CD8-positive, alpha-beta T cell (primary cell): ENCODE measurements at regions of chr3 and their contacts with region 1.

Region 1: GRCh38 chr3:71725279-71725991 is at the start of gene EIF4E3:
- DNase-seq: peak in 8 of 9 experiments; percentile 26 to 79 (median 42)
- ATAC-seq: peak; percentile 28
- H3K4me3 ChIP-seq: peak within 1 kb of the TSS; percentile 74 to 89
- H3K4me3 Mint-ChIP-seq: peak within 1 kb of the TSS; percentile 92
- H3K27ac ChIP-seq: peak within 1 kb of the TSS; percentile 54 to 80
- H3K27ac Mint-ChIP-seq: peak within 1 kb of the TSS; percentile 97
- H3K4me1 ChIP-seq: peaks cover 59% of the 10 kb centered on the region
- H3K4me1 Mint-ChIP-seq: peaks cover 73% of the 10 kb centered on the region
- H3K27me3 ChIP-seq: no peaks in the 10 kb centered on the region
- H3K27me3 Mint-ChIP-seq: no peaks in the 10 kb centered on the region
- CTCF ChIP-seq: no peak
- total RNA-seq, gene EIF4E3: 33.0 to 34.5 TPM

Region 2: DNA sequence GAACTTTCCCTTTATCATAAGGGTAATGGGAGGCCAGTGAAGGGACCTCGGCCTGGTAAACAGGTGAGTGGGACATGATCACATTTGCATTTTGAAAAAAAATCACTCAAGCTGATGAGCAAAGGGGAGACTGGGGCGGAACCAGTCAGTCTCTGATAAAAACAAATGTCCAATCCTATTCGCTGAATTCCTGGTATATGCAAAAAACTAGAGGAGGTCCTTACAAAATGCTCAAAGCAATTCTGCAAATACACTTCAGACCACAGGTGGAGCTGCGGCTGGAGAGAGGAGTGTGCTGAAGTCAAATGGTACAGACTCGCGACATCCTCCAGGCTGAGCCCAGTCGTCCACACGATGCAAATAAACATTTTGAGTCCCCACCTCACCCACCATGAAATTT is 308.6 kb before region 1 on chr3:
- CTCF ChIA-PET with region 1: no interaction called
- POLR2A ChIA-PET with region 1: no interaction called
- intact Hi-C with region 1: loop called in 1 of 2 experiments (anchors 10 kb)
- DNase-seq: peak in 6 of 9 experiments; percentile 41 to 82 (median 60)
- ATAC-seq: peak; percentile 67
- H3K4me3 ChIP-seq: peak overlapping the region in 1 of 2 experiments; percentile 11
- H3K4me3 Mint-ChIP-seq: peak overlapping the region; percentile 54
- H3K27ac ChIP-seq: peak overlapping the region; percentile 60 to 63
- H3K27ac Mint-ChIP-seq: peak overlapping the region; percentile 93
- H3K4me1 ChIP-seq: peaks cover 81% of the 10 kb centered on the region
- H3K4me1 Mint-ChIP-seq: peaks cover 92% of the 10 kb centered on the region
- H3K27me3 ChIP-seq: no peaks in the 10 kb centered on the region
- H3K27me3 Mint-ChIP-seq: no peaks in the 10 kb centered on the region
- CTCF ChIP-seq: peak; percentile 31

Region 3: DNA sequence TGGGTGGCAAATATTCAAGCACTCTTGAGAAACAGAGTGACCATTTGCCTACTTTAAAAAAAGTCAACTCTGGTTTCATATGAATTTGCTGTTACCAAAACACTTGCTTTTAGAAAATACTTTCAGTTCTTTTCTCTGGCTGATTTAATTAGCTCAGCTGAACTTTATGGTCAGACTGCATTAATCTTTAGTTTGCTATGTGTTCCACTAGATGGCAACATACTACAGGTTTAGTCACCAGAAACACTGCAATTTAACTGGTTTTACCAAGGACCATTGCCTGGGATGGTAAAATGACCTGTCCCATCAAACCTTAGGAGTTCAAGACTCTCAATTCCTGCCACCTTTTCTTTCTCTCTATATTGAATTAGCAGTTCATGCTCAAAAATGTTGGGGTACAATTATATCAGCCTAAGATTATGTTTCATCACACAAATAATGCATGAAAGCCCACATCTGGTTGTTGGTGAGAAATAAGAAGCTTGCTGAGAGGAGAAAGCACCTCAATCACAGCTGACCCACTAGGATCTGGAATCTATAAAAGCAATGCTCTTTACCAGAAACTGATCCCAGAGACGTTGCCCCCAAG is 14.4 kb before region 1 on chr3:
- CTCF ChIA-PET with region 1: interaction called, 105 read pairs
- POLR2A ChIA-PET with region 1: interaction called, 5 read pairs
- intact Hi-C with region 1: loop called (anchors 1 to 2 kb)
- DNase-seq: peak in 2 of 9 experiments; percentile 59 to 69
- ATAC-seq: peak; percentile 73
- H3K4me3 ChIP-seq: no peak overlapping the region
- H3K4me3 Mint-ChIP-seq: no peak overlapping the region
- H3K27ac ChIP-seq: no peak overlapping the region
- H3K27ac Mint-ChIP-seq: peak overlapping the region; percentile 7
- H3K4me1 ChIP-seq: peaks cover 23% of the 10 kb centered on the region
- H3K4me1 Mint-ChIP-seq: peaks cover 72% of the 10 kb centered on the region
- H3K27me3 ChIP-seq: no peaks in the 10 kb centered on the region
- H3K27me3 Mint-ChIP-seq: no peaks in the 10 kb centered on the region
- CTCF ChIP-seq: peak; percentile 87

Region 4: DNA sequence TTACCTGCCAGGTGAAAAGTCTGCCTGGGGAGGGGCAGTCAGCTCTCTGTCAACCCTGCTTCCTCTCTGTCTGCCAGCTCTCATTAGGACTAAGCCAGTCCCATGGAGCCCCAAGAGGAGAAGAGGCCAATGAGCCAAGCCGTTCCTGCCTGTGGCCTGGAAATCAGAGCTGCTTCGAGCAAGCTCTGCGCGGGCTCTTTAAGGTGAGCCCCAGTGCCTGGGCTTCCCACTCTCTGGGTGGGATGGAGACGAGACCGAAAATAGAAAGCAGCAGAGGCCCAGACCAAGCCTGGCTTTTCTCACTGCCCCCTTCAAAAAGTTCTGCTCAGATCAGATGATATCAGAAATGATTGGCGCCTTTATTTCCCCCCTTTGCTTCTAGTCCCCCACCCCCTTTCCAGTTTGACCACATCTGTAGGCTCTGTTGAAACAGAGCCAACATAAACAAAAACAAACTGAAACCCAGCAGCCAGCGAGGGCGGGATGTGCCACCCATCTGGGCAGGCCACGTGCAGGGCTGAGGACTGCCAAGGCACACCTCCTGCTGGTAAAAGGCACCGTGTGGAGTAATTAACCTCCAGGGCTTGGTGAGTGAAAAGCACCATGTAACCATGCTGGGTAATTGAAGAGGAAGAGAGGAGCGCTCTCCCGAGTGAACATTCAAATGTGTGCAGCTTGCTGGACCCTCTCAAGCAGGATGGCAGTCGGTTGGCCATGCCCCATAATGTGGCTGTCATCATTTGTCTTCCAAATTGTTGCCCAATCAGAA is 530.5 kb after region 1 on chr3:
- CTCF ChIA-PET with region 1: no interaction called
- POLR2A ChIA-PET with region 1: no interaction called
- intact Hi-C with region 1: loop called in 1 of 2 experiments (anchors 10 kb)
- DNase-seq: peak in 7 of 9 experiments; percentile 10 to 69 (median 29)
- ATAC-seq: peak; percentile 77
- H3K4me3 ChIP-seq: no peak overlapping the region
- H3K4me3 Mint-ChIP-seq: peak overlapping the region; percentile 59
- H3K27ac ChIP-seq: no peak overlapping the region
- H3K27ac Mint-ChIP-seq: peak overlapping the region; percentile 55
- H3K4me1 ChIP-seq: peaks cover 35% of the 10 kb centered on the region
- H3K4me1 Mint-ChIP-seq: peaks cover 41% of the 10 kb centered on the region
- H3K27me3 ChIP-seq: no peaks in the 10 kb centered on the region
- H3K27me3 Mint-ChIP-seq: no peaks in the 10 kb centered on the region
- CTCF ChIP-seq: no peak

Region 5: GRCh38 chr3:72756900-72757299 is 1031.5 kb after region 1 on chr3:
- CTCF ChIA-PET with region 1: no interaction called
- POLR2A ChIA-PET with region 1: no interaction called
- intact Hi-C with region 1: loop called in 1 of 2 experiments (anchors 10 kb)
- DNase-seq: peak in 8 of 9 experiments; percentile 10 to 80 (median 52)
- ATAC-seq: peak; percentile 97
- H3K4me3 ChIP-seq: peak overlapping the region in 1 of 2 experiments; percentile 38
- H3K4me3 Mint-ChIP-seq: peak overlapping the region; percentile 60
- H3K27ac ChIP-seq: peak overlapping the region; percentile 51 to 52
- H3K27ac Mint-ChIP-seq: peak overlapping the region; percentile 93
- H3K4me1 ChIP-seq: peaks cover 44% of the 10 kb centered on the region
- H3K4me1 Mint-ChIP-seq: peaks cover 59% of the 10 kb centered on the region
- H3K27me3 ChIP-seq: no peaks in the 10 kb centered on the region
- H3K27me3 Mint-ChIP-seq: no peaks in the 10 kb centered on the region
- CTCF ChIP-seq: no peak

Region 6: DNA sequence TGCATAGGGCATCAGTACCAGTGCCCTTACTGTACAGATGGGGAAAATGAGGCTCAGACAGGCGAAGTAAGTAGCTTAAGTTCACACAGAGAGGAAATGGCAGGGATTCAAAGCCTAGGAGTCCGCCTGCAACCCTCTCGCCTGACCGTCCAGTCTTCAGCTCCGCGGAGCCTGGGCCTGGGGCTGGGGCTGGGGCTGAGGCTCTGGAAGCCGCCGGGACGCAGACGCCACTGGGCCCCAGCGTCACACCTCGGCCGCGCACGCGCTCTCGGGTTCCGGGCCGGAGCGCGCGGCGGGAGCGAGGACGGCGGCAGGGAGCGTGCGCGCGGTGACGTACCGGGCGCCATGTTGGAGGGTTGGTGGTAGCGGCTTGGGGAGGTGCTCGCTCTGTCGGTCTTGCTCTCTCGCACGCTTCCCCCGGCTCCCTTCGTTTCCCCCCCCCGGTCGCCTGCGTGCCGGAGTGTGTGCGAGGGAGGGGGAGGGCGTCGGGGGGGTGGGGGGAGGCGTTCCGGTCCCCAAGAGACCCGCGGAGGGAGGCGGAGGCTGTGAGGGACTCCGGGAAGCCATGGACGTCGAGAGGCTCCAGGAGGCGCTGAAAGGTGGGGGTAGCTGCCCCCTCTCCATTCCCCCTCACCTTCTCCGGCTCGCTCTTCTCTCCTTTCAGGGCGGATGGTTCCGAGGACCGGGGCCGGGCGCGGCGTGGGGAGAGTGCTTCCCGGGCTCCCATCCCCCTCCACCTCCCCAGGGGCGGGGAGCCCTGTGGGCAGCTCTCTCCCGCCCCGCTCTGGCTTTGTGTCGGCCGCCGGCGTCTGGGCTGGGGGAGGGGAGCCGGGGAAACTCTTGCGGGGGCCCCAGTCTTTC is 1271.3 kb after region 1 on chr3 and contains the start of gene PPP4R2:
- CTCF ChIA-PET with region 1: interaction called, 3 read pairs
- POLR2A ChIA-PET with region 1: no interaction called
- intact Hi-C with region 1: loop called in 1 of 2 experiments (anchors 10 kb)
- DNase-seq: peak; percentile 83 to 97 (median 91)
- ATAC-seq: peak; percentile 87
- H3K4me3 ChIP-seq: peak within 1 kb of the TSS; percentile 82 to 96
- H3K4me3 Mint-ChIP-seq: peak within 1 kb of the TSS; percentile 86
- H3K27ac ChIP-seq: peak within 1 kb of the TSS; percentile 89 to 92
- H3K27ac Mint-ChIP-seq: peak within 1 kb of the TSS; percentile 90
- H3K4me1 ChIP-seq: peaks cover 44% of the 10 kb centered on the region
- H3K4me1 Mint-ChIP-seq: peaks cover 46% of the 10 kb centered on the region
- H3K27me3 ChIP-seq: no peaks in the 10 kb centered on the region
- H3K27me3 Mint-ChIP-seq: no peaks in the 10 kb centered on the region
- CTCF ChIP-seq: no peak
- total RNA-seq, gene PPP4R2: 77.7 to 80.4 TPM